CD4-positive, alpha-beta memory T cell (primary cell): ENCODE measurements at regions of chrX and their contacts with region 1.

Region 1: GRCh38 chrX:18425199-18426003 is at the start of gene CDKL5:
- DNase-seq: peak; percentile 93 to 98 (median 96)
- H3K4me3 ChIP-seq: peak within 1 kb of the TSS; percentile 17 to 66
- H3K4me3 Mint-ChIP-seq: peak within 1 kb of the TSS; percentile 86 to 99 (median 90)
- H3K27ac ChIP-seq: peak within 1 kb of the TSS; percentile 67
- H3K27ac Mint-ChIP-seq: peak within 1 kb of the TSS; percentile 80 to 91 (median 91)
- H3K4me1 ChIP-seq: peaks cover 15% of the 10 kb centered on the region
- H3K4me1 Mint-ChIP-seq: peaks cover 3 to 21% (median 9%) of the 10 kb centered on the region in 4 donors
- H3K27me3 ChIP-seq: no peaks in the 10 kb centered on the region
- H3K27me3 Mint-ChIP-seq: peaks cover 3% of the 10 kb centered on the region in 2 donors
- total RNA-seq, gene CDKL5: 5.0 to 5.7 TPM

Region 2: GRCh38 chrX:17736856-17737706 is 688.3 kb before region 1 on chrX and contains the start of gene SCML1:
- CTCF ChIA-PET with region 1: no interaction called
- POLR2A ChIA-PET with region 1: no interaction called
- intact Hi-C with region 1: loop called (anchors 1 kb)
- DNase-seq: peak; percentile 78 to 90 (median 82)
- H3K4me3 ChIP-seq: peak within 1 kb of the TSS in 1 of 2 donors; percentile 50
- H3K4me3 Mint-ChIP-seq: peak within 1 kb of the TSS; percentile 86 to 97 (median 90)
- H3K27ac ChIP-seq: peak within 1 kb of the TSS; percentile 73
- H3K27ac Mint-ChIP-seq: peak within 1 kb of the TSS; percentile 86 to 98 (median 90)
- H3K4me1 ChIP-seq: peaks cover 15% of the 10 kb centered on the region
- H3K4me1 Mint-ChIP-seq: peaks cover 11 to 33% (median 22%) of the 10 kb centered on the region in 4 donors
- H3K27me3 ChIP-seq: no peaks in the 10 kb centered on the region
- H3K27me3 Mint-ChIP-seq: peaks cover 0 to 3% of the 10 kb centered on the region in 2 donors
- total RNA-seq, gene SCML1: 14.4 to 18.0 TPM

Region 3: GRCh38 chrX:18674788-18675735 is 249.7 kb after region 1 on chrX:
- CTCF ChIA-PET with region 1: no interaction called
- POLR2A ChIA-PET with region 1: interaction called, 4 read pairs
- intact Hi-C with region 1: loop called (anchors 1 kb)
- DNase-seq: peak; percentile 80 to 87 (median 86)
- H3K4me3 ChIP-seq: peak overlapping the region; percentile 11 to 54
- H3K4me3 Mint-ChIP-seq: peak overlapping the region; percentile 78 to 87 (median 84)
- H3K27ac ChIP-seq: peak overlapping the region; percentile 67
- H3K27ac Mint-ChIP-seq: peak overlapping the region; percentile 46 to 97 (median 82)
- H3K4me1 ChIP-seq: no peaks in the 10 kb centered on the region
- H3K4me1 Mint-ChIP-seq: peaks cover 4 to 16% (median 8%) of the 10 kb centered on the region in 4 donors
- H3K27me3 ChIP-seq: no peaks in the 10 kb centered on the region
- H3K27me3 Mint-ChIP-seq: no peaks in the 10 kb centered on the region

Region 4: DNA sequence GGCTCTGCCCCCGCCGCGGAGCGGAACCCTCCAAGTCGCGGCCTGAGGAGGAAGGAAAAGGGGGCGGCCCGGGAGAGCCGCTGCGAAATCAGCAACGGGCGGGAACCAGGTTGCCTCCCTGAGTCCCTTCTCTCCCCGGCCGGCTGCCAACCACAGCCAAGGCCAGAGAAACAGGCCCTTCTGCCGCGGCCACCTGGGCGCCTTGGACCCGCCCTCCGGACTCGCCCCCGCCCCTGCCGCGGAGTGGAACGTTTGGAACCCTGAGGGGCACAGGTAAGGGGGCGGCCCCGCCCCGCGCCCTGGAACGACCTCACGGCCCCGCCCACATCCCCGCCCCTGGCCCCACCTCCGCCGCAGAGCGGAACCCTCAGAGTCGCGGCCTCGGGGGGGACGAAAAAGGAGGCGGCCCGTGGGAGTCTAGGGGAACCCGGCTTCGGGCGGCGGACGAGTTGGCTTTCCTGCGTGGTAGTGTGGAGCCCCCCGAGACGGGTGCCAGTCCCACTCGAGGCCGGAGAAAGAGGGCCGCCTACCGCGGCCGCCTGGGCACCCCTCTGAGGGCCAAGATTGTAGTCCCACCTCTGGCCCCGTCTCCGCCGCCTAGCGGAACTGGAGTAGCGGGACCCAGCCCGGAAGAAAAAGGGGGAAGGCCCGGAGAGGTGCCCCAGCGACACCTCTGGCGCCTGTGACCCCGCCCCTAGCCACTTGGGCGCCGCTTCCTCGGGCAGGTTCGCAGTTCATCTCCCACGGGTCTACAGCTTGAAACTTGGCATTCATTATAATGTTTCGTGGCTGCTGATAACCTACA is 559.2 kb after region 1 on chrX:
- CTCF ChIA-PET with region 1: no interaction called
- POLR2A ChIA-PET with region 1: interaction called, 5 read pairs
- intact Hi-C with region 1: loop called (anchors 1 kb)
- DNase-seq: peak; percentile 85 to 89 (median 87)
- H3K4me3 ChIP-seq: peak overlapping the region in 1 of 2 donors; percentile 63
- H3K4me3 Mint-ChIP-seq: peak overlapping the region; percentile 75 to 88 (median 82)
- H3K27ac ChIP-seq: peak overlapping the region; percentile 70
- H3K27ac Mint-ChIP-seq: peak overlapping the region; percentile 82 to 97 (median 91)
- H3K4me1 ChIP-seq: peaks cover 21% of the 10 kb centered on the region
- H3K4me1 Mint-ChIP-seq: peaks cover 7 to 23% (median 14%) of the 10 kb centered on the region in 4 donors
- H3K27me3 ChIP-seq: no peaks in the 10 kb centered on the region
- H3K27me3 Mint-ChIP-seq: no peaks in the 10 kb centered on the region

Region 5: GRCh38 chrX:20141281-20142220 is 1716.2 kb after region 1 on chrX and contains the start of gene EIF1AX:
- CTCF ChIA-PET with region 1: no interaction called
- POLR2A ChIA-PET with region 1: no interaction called
- intact Hi-C with region 1: loop called (anchors 10 kb)
- DNase-seq: peak; percentile 98 to 100 (median 99)
- H3K4me3 ChIP-seq: peak within 1 kb of the TSS; percentile 80 to 81
- H3K4me3 Mint-ChIP-seq: peak within 1 kb of the TSS; percentile 85 to 95 (median 92)
- H3K27ac ChIP-seq: peak within 1 kb of the TSS; percentile 84
- H3K27ac Mint-ChIP-seq: peak within 1 kb of the TSS; percentile 84 to 96 (median 94)
- H3K4me1 ChIP-seq: peaks cover 22% of the 10 kb centered on the region
- H3K4me1 Mint-ChIP-seq: peaks cover 12 to 33% (median 28%) of the 10 kb centered on the region in 4 donors
- H3K27me3 ChIP-seq: no peaks in the 10 kb centered on the region
- H3K27me3 Mint-ChIP-seq: no peaks in the 10 kb centered on the region
- total RNA-seq, gene EIF1AX: 61.1 to 62.4 TPM